ENCODE measurements at regions of chr5 and their contacts with region 1.

Region 1: DNA sequence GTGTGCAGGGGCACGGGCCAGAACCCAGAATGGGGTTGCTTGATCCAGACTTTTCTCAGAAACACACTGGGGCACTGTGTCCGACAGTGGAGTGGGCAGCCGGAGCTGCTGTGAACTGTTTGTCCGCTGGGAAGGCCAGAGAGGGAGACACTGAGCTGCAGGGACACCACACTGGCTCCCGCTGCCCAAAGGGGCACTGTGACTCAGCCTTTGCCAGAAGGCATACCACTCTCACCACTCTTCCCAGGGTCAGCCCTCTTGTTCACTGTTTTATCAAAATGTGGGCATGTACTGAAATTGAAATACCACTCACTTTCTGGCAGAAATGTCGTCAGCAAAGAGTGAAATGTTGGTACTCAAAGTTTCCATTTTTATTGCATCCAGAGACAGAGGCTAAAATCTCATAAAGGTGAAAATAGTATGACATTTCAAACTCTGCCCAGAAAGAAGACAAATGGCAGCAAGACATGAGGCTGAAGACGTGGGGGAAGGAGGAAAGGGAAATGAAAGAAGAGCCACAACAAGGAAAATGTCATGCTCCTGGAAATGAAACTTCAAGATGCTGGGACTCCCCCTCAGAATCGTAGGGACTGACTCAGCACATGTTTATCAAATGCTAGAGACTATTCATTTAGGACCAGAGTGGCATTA is 4.5 kb upstream of the IL7R start:
- DNase-seq: peak; percentile 86
- H3K4me3 Mint-ChIP-seq: peak overlapping the region; percentile 87
- H3K27ac Mint-ChIP-seq: peak overlapping the region; percentile 99
- H3K4me1 Mint-ChIP-seq: peaks cover 59% of the 10 kb centered on the region
- H3K27me3 Mint-ChIP-seq: no peaks in the 10 kb centered on the region

Region 2: DNA sequence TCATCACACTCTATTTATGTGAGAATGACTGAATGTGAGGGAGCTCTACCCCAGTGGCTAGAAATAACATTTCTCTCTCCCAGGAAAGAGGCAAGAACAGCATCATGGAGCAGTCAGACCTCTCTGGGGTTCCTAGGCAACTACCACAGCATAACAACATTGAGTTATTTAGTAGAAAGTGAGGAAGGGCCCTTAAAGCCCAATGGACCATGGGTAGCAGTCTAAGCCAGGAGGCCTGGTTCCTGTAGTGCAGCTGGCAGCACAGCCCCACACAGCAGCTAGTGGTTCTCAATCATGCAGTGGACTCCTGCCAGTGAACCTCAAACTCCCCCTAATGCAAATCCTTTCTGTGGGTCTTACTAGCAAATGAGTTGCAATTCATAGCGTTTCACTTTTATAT is 179.2 kb before region 1 on chr5:
- intact Hi-C with region 1: loop called (anchors 1 kb)
- DNase-seq: peak; percentile 86
- H3K4me3 Mint-ChIP-seq: peak overlapping the region; percentile 51
- H3K27ac Mint-ChIP-seq: peak overlapping the region; percentile 80
- H3K4me1 Mint-ChIP-seq: peaks cover 45% of the 10 kb centered on the region
- H3K27me3 Mint-ChIP-seq: no peaks in the 10 kb centered on the region

Region 3: DNA sequence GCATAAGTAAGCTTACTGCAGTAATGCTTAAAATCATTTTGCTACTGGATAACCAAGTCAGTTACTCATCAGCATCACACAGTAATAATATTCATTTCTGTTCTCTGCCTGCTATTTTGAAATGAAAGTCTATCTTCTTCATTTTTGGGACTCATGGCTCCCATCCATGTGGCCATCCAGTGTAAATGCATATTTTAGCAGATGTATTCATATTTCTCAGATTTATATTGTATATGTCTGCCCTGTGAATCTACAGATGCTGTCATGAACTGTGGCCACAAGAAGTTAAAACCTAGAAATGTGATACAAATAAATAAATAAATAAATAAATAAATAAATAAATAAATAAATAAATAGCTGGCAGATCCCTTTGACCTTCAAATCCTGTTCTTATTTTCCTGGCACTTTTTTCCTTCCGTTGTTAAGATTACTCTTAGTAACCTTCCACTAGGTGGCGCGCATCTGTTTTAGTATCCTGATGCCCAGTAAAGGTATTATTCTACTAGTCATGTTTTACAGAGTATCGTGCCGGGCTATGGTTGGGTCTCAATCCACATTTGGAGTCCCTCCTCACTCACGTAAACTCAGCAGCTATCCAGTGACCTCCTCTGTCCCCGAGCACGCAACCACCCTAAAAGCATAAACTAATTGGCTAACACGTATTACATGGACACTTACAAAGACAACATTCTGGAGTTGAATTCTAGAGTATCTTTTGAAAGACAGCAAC is 74.7 kb before region 1 on chr5:
- intact Hi-C with region 1: loop called (anchors 1 kb)
- DNase-seq: peak; percentile 91
- H3K4me3 Mint-ChIP-seq: peak overlapping the region; percentile 4
- H3K27ac Mint-ChIP-seq: peak overlapping the region; percentile 49
- H3K4me1 Mint-ChIP-seq: peaks cover 56% of the 10 kb centered on the region
- H3K27me3 Mint-ChIP-seq: no peaks in the 10 kb centered on the region

Region 4: GRCh38 chr5:35815089-35815936 is 36.9 kb before region 1 on chr5:
- intact Hi-C with region 1: loop called (anchors 1 kb)
- DNase-seq: peak; percentile 83
- H3K4me3 Mint-ChIP-seq: no peak overlapping the region
- H3K27ac Mint-ChIP-seq: no peak overlapping the region
- H3K4me1 Mint-ChIP-seq: peaks cover 34% of the 10 kb centered on the region
- H3K27me3 Mint-ChIP-seq: no peaks in the 10 kb centered on the region

Region 5: GRCh38 chr5:35926389-35927051 is 74.3 kb after region 1 on chr5:
- intact Hi-C with region 1: loop called (anchors 1 kb)
- DNase-seq: peak; percentile 91
- H3K4me3 Mint-ChIP-seq: peak overlapping the region; percentile 50
- H3K27ac Mint-ChIP-seq: no peak overlapping the region
- H3K4me1 Mint-ChIP-seq: peaks cover 26% of the 10 kb centered on the region
- H3K27me3 Mint-ChIP-seq: peaks cover 7% of the 10 kb centered on the region

Measured in activated CD4-positive, alpha-beta T cell treated with anti-CD3 and anti-CD28 coated beads, Interleukin-2, amount 10 ng/mL, durations not matched to agents 24 days and 14 days (primary cell).